Activated T-helper 2 cell treated with anti-CD3 and anti-CD28 coated beads, Interferon-gamma antibody, Interleukin-2, Interleukin-4, amounts not matched to agents 10 μg/mL and 5 μg/mL and 100 μg/mL, durations not matched to agents 14 hours and 24 hours and 36 hours (primary cell): ENCODE measurements at regions of chr18 and their contacts with region 1.

Region 1: DNA sequence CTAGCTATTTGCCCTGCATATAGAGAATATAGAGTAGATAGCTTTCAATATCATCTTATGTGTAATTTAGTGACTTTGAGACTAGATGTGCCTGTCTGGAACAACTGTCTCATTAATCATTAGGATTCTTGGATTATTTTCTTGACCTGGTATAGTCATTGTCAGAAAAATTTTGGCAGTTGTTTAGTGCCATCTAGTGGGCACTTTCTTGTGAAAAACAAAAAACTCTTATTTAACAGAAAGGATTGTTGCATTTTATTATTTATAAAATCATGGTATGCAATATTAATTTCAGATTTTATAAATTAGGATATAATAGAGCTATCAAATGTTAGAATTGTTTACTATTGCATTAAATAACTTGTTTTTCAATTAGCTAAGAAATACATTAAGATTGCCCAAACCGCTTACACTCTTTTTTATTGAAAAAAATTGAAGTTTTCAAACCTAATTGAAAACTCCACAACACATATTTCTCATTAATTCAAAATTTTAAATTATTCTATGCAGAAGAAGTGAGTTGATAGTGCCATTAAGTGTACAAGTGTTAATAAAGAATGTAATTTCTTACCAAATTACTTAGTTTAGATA is 80.3 kb downstream of the DYNAP start:
- DNase-seq: no peak
- H3K4me3 Mint-ChIP-seq: no peak overlapping the region
- H3K27ac Mint-ChIP-seq: no peak overlapping the region
- H3K4me1 Mint-ChIP-seq: no peaks in the 10 kb centered on the region
- H3K27me3 Mint-ChIP-seq: peaks cover 10% of the 10 kb centered on the region

Region 2: DNA sequence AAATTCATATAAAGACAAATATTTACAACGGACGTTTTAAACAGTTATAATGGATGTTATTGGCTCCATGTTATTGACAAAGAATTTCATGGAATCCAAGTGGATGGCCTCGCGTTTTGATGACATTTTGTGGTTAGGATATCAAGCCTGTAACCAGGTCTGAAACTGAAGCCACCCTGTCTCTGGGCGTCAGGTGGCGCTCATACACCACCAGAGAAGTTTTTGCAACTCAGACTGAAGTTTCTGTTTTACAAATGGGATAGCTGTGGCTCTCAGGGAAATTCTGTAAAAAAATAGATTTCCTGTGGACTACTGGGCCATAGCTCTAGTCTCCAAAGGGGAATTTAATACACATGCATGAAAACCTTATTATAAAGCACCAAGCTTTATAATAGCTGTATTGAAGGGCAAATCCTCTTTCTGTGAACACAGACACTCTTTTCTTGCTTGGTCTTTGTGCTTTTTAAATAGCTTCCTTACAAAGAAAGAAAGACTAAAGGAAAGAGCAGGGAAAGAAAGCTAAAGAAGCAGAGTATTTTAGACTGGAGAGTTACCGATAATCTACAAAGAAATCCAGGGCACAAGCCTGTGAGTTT is 227.0 kb before region 1 on chr18:
- intact Hi-C with region 1: loop called (anchors 1 kb)
- DNase-seq: no peak
- H3K4me3 Mint-ChIP-seq: no peak overlapping the region
- H3K27ac Mint-ChIP-seq: no peak overlapping the region
- H3K4me1 Mint-ChIP-seq: peaks cover 1% of the 10 kb centered on the region
- H3K27me3 Mint-ChIP-seq: peaks cover 17% of the 10 kb centered on the region

Region 3: DNA sequence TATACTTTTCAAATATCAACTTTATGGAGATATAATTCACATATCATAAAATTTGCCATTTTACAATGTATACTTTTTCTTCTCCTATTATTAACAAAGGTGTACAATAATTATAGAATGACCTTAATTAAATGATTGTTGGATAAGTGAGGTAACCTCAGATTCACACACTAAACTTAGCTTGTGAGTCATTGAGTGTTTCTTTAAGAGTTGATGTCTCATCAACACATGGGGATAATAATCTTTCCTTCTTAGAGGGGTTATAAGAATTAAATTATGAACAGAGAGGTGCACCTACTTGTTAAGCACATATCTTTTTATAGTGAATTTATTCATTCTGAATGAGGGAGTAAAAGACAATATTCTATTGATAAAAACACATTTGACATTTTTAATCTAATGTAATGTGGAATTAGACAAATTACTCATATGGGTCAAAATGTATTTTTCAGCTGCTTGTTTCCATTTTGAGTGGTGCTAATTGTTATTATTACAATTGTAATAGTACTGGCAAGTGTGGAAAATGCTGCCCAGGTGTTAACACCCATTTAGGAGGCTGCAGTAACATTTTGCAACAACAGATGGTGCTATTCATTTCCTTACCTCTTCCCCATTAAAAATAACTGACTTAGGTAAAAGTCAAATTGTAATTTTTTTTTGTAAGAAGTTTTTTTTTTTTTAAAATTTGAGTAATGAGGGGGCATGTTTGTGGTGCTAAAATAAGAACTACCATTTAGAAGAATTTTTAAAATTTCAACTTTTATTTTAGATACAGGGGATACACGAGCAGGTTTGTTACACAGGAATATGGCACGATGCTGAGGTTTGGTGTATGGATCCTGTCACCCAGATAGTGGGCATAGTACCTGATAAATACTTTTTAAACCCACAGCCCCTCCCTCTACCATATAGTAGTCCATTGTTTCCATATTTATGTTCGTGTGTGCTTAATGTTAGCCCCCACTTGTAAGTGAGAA is 112.5 kb before region 1 on chr18:
- intact Hi-C with region 1: loop called (anchors 2 kb)
- DNase-seq: no peak
- H3K4me3 Mint-ChIP-seq: no peak overlapping the region
- H3K27ac Mint-ChIP-seq: no peak overlapping the region
- H3K4me1 Mint-ChIP-seq: no peaks in the 10 kb centered on the region
- H3K27me3 Mint-ChIP-seq: no peaks in the 10 kb centered on the region

Region 4: GRCh38 chr18:54734059-54734458 is 62.7 kb after region 1 on chr18:
- intact Hi-C with region 1: no loop called
- DNase-seq: no peak
- H3K4me3 Mint-ChIP-seq: no peak overlapping the region
- H3K27ac Mint-ChIP-seq: no peak overlapping the region
- H3K4me1 Mint-ChIP-seq: peaks cover 5% of the 10 kb centered on the region
- H3K27me3 Mint-ChIP-seq: peaks cover 51% of the 10 kb centered on the region